OCI-LY7 (cell line): ENCODE measurements at regions of chr5 and their contacts with region 1.

Region 1: DNA sequence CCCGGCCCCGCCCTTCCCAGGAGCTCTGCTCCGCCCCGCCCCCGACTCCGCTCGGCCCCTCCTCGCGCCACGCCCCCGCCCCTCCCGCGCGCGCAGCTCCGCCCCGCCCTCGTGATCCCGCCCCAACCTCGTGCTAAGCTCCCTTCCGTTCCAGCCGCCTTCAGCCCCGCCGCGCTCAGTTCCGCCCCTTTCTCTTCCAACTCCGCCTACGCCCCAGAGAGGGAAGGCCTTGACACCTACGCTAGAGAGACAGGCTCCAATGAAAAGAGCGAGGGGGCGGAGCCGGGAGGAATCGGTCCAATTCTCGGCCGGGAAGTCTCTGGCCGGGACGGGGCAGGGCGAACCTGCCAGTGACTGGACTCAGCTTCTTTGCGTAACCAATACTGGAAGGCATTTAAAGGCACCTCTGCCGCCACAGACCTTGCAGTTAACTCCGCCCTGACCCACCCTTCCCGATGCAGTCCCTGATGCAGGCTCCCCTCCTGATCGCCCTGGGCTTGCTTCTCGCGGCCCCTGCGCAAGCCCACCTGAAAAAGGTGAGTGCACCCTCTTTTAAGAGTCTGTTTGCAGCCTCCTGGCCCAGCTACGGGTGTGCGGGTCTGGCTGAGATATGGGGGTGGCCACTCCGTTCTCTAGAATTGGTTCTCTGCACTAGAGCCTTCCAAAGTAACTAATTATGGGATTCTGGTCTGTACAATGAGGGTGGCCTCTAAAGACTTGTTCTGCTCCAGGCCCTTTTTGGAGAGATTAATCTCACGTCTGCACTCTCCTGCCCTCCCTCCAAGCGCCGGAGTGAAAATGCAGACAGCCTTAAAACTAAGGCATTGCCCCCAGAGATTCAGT is at the start of gene GM2A:
- DNase-seq: peak; percentile 100
- H3K4me3 ChIP-seq: peak within 1 kb of the TSS; percentile 97
- H3K27ac ChIP-seq: peak within 1 kb of the TSS; percentile 88
- H3K4me1 ChIP-seq: peaks cover 56% of the 10 kb centered on the region
- CTCF ChIP-seq: no peak
- total RNA-seq, gene GM2A: 52.4 and 60.2 TPM in 2 replicates

Region 2: DNA sequence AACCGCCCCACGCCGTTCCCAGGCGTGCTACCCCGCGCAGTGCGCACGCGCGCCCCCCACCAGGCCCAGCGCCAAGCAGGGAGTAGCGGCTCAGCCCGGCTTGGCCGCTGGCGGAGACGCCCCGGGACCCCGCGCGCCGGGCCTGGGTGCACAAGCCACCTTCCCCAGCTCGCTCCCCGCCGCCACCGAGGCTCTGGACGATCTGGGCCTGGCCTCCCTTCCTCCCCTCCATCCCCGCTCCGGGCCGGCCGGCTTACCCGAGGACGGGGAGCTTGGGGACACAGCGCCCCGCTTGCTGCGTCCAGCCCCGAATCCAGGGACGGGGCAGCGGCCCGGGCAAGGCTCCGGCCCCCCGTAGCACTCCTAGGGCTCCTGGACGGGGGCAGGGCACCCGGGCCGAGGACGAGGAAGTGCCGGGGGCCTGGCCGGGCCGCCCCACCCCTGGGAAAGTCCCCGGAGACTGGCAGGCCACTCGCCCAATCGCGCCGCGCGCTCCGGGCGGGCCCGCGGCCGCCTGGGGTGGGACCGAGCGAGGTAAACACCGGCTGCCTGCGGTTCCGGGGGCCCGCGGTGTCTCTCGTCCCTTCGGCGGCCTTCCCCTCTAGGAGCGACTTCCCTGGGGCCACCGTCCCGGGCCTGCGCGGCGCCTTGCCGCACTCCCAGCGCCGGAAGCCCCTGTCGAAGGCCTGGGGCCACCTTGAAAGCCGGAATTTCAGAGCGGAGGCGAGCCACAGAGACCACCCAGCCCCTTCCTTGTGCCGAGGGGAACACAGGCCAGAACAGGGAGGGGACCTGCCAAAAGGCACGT is 172.2 kb before region 1 on chr5 and contains the start of gene TNIP1:
- CTCF ChIA-PET with region 1: no interaction called
- POLR2A ChIA-PET with region 1: interaction called, 7 read pairs
- intact Hi-C with region 1: loop called (anchors 1 kb)
- DNase-seq: peak; percentile 94
- H3K4me3 ChIP-seq: peak within 1 kb of the TSS; percentile 88
- H3K27ac ChIP-seq: peak within 1 kb of the TSS; percentile 75
- H3K4me1 ChIP-seq: peaks cover 58% of the 10 kb centered on the region
- CTCF ChIP-seq: 0 out of 2 replicates have a peak, but pooled peaks have one; percentile 25
- total RNA-seq, gene TNIP1: 51.4 and 55.9 TPM in 2 replicates

Region 3: GRCh38 chr5:151150471-151151262 is 102.3 kb before region 1 on chr5:
- CTCF ChIA-PET with region 1: interaction called, 9 read pairs
- POLR2A ChIA-PET with region 1: interaction called, 12 read pairs
- intact Hi-C with region 1: no loop called
- DNase-seq: peak; percentile 81
- H3K4me3 ChIP-seq: peak overlapping the region; percentile 31
- H3K27ac ChIP-seq: peak overlapping the region; percentile 90
- H3K4me1 ChIP-seq: peaks cover 79% of the 10 kb centered on the region
- CTCF ChIP-seq: no peak

Region 4: GRCh38 chr5:151208481-151208914 is 44.5 kb before region 1 on chr5:
- CTCF ChIA-PET with region 1: interaction called, 5 read pairs
- POLR2A ChIA-PET with region 1: interaction called, 13 read pairs
- intact Hi-C with region 1: loop called (anchors 5 kb)
- DNase-seq: no peak
- H3K4me3 ChIP-seq: no peak overlapping the region
- H3K27ac ChIP-seq: peak overlapping the region; percentile 35
- H3K4me1 ChIP-seq: peaks cover 73% of the 10 kb centered on the region
- CTCF ChIP-seq: no peak

Region 5: DNA sequence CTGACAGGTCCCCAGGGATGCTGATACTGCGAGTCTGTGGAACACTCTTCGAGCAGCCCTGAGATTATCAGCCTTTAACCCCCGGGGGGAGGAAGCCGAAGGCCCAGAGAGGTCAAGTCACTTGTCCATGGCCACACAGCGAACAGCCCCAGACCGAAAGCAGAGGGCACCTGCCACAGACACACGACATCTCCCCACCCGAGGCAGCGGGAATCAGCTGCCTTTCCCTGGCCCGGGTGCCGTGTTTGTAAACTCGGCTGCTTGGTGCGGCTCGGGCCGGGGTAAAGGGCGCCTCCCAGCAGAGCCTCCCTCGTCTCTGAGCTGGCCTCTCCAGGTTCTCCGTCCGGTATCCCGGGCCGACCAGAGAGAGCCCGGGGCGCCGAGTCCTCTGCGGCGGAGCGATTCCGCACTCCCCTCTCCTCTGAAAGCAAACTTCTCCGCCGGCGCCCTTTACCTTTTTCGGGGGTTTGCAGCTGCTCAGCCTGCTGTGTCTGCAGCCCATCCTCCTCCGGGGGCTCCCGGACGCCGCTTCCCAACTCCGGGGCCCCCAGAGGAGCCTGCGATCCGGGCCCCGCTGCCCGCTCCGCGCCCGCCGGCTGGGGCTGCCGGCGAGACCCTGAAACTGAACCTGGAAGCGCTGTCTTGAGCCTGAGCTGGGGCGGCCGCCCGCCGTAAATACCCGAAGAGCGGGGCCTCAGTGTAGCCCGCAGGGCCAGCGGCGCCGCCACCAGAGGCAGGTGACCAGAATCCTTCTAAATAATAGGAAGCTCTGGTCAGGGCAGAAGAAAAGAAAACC is 29.3 kb before region 1 on chr5 and contains the start of gene CCDC69:
- CTCF ChIA-PET with region 1: interaction called, 6 read pairs
- POLR2A ChIA-PET with region 1: interaction called, 12 read pairs
- intact Hi-C with region 1: no loop called
- DNase-seq: peak; percentile 79
- H3K4me3 ChIP-seq: peak within 1 kb of the TSS; percentile 84
- H3K27ac ChIP-seq: peak within 1 kb of the TSS; percentile 98
- H3K4me1 ChIP-seq: peaks cover 77% of the 10 kb centered on the region
- CTCF ChIP-seq: peak; percentile 40
- total RNA-seq, gene CCDC69: 111 and 123 TPM in 2 replicates

Region 6: DNA sequence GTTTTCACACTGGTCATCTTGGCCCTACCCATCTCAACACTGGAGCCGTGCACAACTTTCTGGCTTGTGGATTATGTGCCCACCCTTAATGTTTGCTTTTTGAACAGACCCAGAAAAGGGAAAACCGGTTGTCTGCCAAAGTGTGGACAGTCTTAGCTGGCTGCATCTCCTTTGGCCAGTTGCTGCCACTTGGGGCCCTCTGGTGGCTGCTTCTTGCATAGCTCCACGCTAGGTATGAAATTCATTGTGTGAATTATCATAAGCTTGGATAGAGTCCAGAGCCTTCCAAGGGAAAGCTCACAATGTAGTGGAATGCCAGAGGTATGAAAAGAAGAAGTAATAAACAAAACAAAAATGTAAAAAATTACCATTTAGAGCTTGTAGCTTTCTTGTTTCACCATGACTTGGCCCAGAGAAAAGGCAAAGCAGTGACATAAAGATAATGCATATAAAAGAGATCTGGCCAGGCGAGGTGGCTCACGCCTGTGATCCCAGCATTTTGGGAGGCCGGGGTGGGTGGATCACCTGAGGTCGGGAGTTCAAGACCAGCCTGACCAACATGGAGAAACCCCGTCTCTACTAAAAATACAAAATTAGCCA is 63.1 kb after region 1 on chr5:
- CTCF ChIA-PET with region 1: interaction called, 4 read pairs
- POLR2A ChIA-PET with region 1: no interaction called
- intact Hi-C with region 1: loop called (anchors 5 kb)
- DNase-seq: peak; percentile 72
- H3K4me3 ChIP-seq: no peak overlapping the region
- H3K27ac ChIP-seq: no peak overlapping the region
- H3K4me1 ChIP-seq: peaks cover 6% of the 10 kb centered on the region
- CTCF ChIP-seq: peak; percentile 98

Region 7: GRCh38 chr5:151771259-151772028 is 518.5 kb after region 1 on chr5 and contains the start of gene G3BP1:
- CTCF ChIA-PET with region 1: no interaction called
- POLR2A ChIA-PET with region 1: interaction called, 3 read pairs
- intact Hi-C with region 1: loop called (anchors 5 kb)
- DNase-seq: peak; percentile 100
- H3K4me3 ChIP-seq: peak within 1 kb of the TSS; percentile 91
- H3K27ac ChIP-seq: peak within 1 kb of the TSS; percentile 87
- H3K4me1 ChIP-seq: peaks cover 37% of the 10 kb centered on the region
- CTCF ChIP-seq: no peak; the same call in 1 of the 2 replicates
- total RNA-seq, gene G3BP1: 163 and 178 TPM in 2 replicates